ENCODE measurements at regions of chr6 and their contacts with region 1.

Region 1: DNA sequence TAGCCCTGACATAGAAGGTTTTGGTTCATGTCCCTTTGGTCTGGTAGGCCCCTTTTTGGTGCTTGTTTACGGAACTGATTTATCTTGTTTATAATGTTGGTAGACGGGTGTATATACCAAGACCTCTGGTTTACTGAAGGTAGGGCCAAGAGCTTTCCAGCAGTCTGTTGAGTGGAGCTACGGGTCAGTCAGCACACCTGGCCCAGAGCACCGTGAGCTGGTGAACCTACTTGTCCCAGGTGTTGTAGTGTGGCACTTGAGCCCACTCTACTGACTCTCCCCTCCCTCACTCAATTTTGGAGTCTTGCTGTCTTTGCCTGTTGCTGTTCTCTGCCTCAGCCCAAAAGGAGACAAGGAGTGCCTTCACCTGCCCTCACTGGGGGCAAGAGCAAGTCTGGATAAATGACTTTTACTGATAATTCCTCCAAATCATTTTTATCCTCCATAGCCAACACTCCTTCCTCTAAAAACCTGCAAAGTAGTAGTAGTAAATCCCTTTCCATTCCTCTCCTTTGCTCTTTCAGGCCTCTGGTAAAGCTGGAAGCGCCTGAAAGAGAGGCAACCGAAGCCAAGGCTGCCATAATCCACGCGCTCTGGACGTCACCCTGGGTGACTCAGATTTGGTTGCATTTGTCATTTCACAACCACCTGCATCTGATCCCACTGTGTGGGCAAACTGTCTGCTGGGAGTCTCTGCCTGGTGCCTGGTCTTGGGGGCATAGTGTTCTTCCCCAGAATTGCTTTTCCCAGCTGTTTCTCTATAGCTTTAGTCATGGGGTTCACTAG is 22.2 kb downstream of the RREB1 start:
- DNase-seq: no peak
- ATAC-seq: peak; percentile 31
- H3K4me3 ChIP-seq: no peak overlapping the region
- H3K27ac ChIP-seq: peak overlapping the region; percentile 42
- H3K4me1 ChIP-seq: peaks cover 15 to 41% of the 10 kb centered on the region in 2 experiments; a peak in 4 of 5 replicates
- H3K27me3 ChIP-seq: no peaks in the 10 kb centered on the region
- CTCF ChIP-seq: no peak
- EP300 ChIP-seq: no peak
- POLR2A ChIP-seq: no peak
- RAD21 ChIP-seq: no peak

Region 2: GRCh38 chr6:6969761-6970223 is 160.2 kb before region 1 on chr6:
- CTCF ChIA-PET with region 1: no interaction called
- POLR2A ChIA-PET with region 1: no interaction called
- in situ Hi-C with region 1: no loop called
- intact Hi-C with region 1: no loop called
- DNase-seq: peak; percentile 50 to 58 (median 52)
- ATAC-seq: peak; percentile 48
- H3K4me3 ChIP-seq: no peak overlapping the region
- H3K27ac ChIP-seq: peak overlapping the region; percentile 82; the same call in 1 of the 3 replicates
- H3K4me1 ChIP-seq: peaks cover 26 to 57% of the 10 kb centered on the region in 2 experiments; a peak in 4 of 5 replicates
- H3K27me3 ChIP-seq: no peaks in the 10 kb centered on the region
- CTCF ChIP-seq: no peak
- EP300 ChIP-seq: no peak
- POLR2A ChIP-seq: no peak
- RAD21 ChIP-seq: no peak

Region 3: GRCh38 chr6:7112741-7113313 is 17.1 kb before region 1 on chr6:
- CTCF ChIA-PET with region 1: no interaction called
- POLR2A ChIA-PET with region 1: interaction called, 34 read pairs
- in situ Hi-C with region 1: no loop called
- intact Hi-C with region 1: no loop called
- DNase-seq: peak in 1 of 4 experiments; percentile 52
- ATAC-seq: peak; percentile 4
- H3K4me3 ChIP-seq: peak overlapping the region; percentile 18; the same call in 1 of the 2 replicates
- H3K27ac ChIP-seq: peak overlapping the region; percentile 33; the same call in 2 of the 3 replicates
- H3K4me1 ChIP-seq: peaks cover 55 to 62% of the 10 kb centered on the region in 2 experiments
- H3K27me3 ChIP-seq: no peaks in the 10 kb centered on the region
- CTCF ChIP-seq: no peak
- EP300 ChIP-seq: no peak
- POLR2A ChIP-seq: no peak
- RAD21 ChIP-seq: 0 out of 4 replicates have a peak, but pooled peaks of 1 of the 2 experiments have one; percentile 10